ENCODE measurements at regions of chr3 and their contacts with region 1.

Region 1: GRCh38 chr3:68876112-68876713 is 56.1 kb downstream of the TAFA4 start:
- DNase-seq: peak; percentile 79
- H3K4me3 Mint-ChIP-seq: no peak overlapping the region
- H3K27ac Mint-ChIP-seq: no peak overlapping the region
- H3K4me1 Mint-ChIP-seq: no peaks in the 10 kb centered on the region
- H3K27me3 Mint-ChIP-seq: peaks cover 7% of the 10 kb centered on the region

Region 2: GRCh38 chr3:66938338-66938963 is 1937.8 kb before region 1 on chr3:
- intact Hi-C with region 1: loop called (anchors 5 kb)
- DNase-seq: peak; percentile 77
- H3K4me3 Mint-ChIP-seq: no peak overlapping the region
- H3K27ac Mint-ChIP-seq: no peak overlapping the region
- H3K4me1 Mint-ChIP-seq: no peaks in the 10 kb centered on the region
- H3K27me3 Mint-ChIP-seq: peaks cover 17% of the 10 kb centered on the region

Region 3: GRCh38 chr3:66971891-66972551 is 1904.2 kb before region 1 on chr3:
- intact Hi-C with region 1: loop called (anchors 1 kb)
- DNase-seq: peak; percentile 89
- H3K4me3 Mint-ChIP-seq: peak overlapping the region; percentile 78
- H3K27ac Mint-ChIP-seq: peak overlapping the region; percentile 66
- H3K4me1 Mint-ChIP-seq: peaks cover 13% of the 10 kb centered on the region
- H3K27me3 Mint-ChIP-seq: peaks cover 11% of the 10 kb centered on the region

Region 4: DNA sequence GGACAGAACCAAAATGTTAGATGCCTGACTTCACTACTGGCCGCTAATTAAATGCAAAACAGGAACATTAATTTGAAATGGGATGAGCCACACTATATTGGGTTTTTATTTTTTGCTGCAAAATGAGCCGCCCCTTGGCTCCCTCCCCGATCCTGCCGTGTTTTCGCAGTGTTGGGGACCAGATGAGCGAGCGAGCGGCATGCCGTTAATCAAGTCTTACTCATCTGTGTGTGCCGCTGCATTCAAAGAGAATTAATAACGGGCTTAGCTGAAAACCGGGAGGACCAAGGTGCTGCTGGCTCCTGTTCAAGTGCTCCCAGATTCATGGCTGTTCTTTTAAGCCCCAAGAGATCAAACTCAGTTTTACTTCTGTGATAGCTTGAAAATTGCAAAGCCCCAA is 36.2 kb after region 1 on chr3:
- intact Hi-C with region 1: no loop called
- DNase-seq: no peak
- H3K4me3 Mint-ChIP-seq: no peak overlapping the region
- H3K27ac Mint-ChIP-seq: no peak overlapping the region
- H3K4me1 Mint-ChIP-seq: no peaks in the 10 kb centered on the region
- H3K27me3 Mint-ChIP-seq: peaks cover 20% of the 10 kb centered on the region

Measured in activated CD4-positive, alpha-beta T cell treated with anti-CD3 and anti-CD28 coated beads, Interleukin-2, amount 10 ng/mL, durations not matched to agents 24 days and 14 days (primary cell).